Pancreas (tissue), 10 donors: ENCODE measurements at regions of chr11 and their contacts with region 1.

Region 1: DNA sequence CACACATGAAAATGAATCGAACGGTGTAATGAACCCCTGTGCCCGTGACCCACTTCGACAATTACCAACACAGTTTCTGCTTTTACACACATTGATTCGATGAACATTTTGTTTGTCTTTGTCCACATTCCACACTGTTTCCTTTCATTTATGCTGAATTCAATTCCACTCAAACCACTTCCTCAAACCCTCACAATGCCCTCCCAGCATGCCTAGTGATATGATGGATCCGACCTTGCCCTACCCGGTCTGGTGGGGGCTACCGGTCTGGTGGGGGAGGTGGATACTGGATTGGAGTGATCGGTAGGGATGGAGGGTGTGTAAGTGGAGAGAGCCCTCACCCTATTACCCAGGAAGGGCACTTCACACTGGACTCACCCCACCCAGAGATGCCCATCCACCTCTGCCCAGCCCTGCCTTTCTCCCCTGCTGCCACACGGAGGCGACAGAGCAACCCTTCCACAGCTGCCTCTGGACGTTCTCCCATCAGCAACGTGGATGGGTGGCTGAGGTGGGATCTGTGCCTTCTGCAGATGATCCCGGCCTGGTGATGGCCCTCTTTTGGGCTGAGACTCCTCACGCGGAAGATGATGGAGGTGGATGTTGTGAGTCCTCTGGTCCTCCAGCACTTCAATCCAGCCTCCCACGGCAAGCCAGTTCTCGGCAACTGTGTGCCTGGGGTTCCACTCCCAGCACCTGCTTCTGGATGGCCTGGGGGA is 33.0 kb upstream of the P2RY2 start:
- DNase-seq: peak; percentile 45 to 85 (median 70)
- ATAC-seq: peak; percentile 83 to 91 (median 90)
- H3K4me3 ChIP-seq: no peak overlapping the region
- H3K27ac ChIP-seq: peak overlapping the region in 1 of 4 donors; percentile 39
- H3K4me1 ChIP-seq: peaks cover 0 to 3% (median 0%) of the 10 kb centered on the region in 3 donors
- H3K27me3 ChIP-seq: no peaks in the 10 kb centered on the region
- CTCF ChIP-seq: peak; percentile 72 to 86 (median 75)

Region 2: GRCh38 chr11:72439455-72439854 is 745.7 kb before region 1 on chr11:
- intact Hi-C with region 1: no loop called
- DNase-seq: no peak
- ATAC-seq: peak in 1 of 4 donors; percentile 30
- H3K4me3 ChIP-seq: no peak overlapping the region
- H3K27ac ChIP-seq: no peak overlapping the region
- H3K4me1 ChIP-seq: no peaks in the 10 kb centered on the region
- H3K27me3 ChIP-seq: no peaks in the 10 kb centered on the region
- CTCF ChIP-seq: no peak

Region 3: DNA sequence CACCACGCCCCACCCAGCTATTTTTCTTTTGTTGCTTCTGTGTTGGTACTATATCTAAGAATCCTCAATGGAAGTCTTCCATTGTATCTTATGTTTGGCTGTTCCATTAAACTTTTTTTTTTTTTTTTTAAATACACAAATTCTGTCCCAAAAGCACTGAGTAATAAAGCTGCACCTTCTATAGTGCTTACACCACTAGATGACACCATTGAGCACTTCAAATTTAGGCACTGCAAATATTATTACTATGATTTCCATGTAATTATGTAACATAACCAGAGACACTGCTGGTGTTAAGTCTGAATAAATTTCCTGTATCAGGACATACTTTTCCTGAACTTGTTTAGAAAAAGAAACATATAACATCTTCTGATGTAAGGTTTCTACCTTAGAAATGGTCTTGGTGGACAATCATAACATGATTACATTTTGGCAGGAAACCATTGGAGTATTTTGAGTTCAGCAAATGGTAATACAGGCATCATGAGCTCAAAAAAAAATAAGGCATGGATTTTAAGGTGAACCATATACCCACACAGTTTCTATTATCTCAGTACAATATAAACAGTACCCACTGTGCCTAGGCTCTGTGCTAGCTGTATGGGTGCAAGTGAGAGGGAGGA is 260.4 kb before region 1 on chr11:
- intact Hi-C with region 1: loop called in 1 of 3 experiments (anchors 10 kb)
- DNase-seq: no peak
- ATAC-seq: peak; percentile 64 to 92 (median 84)
- H3K4me3 ChIP-seq: no peak overlapping the region
- H3K27ac ChIP-seq: no peak overlapping the region
- H3K4me1 ChIP-seq: peaks cover 0 to 8% (median 0%) of the 10 kb centered on the region in 3 donors
- H3K27me3 ChIP-seq: no peaks in the 10 kb centered on the region
- CTCF ChIP-seq: peak in 3 of 4 donors; percentile 8 to 35 (median 22)

Region 4: DNA sequence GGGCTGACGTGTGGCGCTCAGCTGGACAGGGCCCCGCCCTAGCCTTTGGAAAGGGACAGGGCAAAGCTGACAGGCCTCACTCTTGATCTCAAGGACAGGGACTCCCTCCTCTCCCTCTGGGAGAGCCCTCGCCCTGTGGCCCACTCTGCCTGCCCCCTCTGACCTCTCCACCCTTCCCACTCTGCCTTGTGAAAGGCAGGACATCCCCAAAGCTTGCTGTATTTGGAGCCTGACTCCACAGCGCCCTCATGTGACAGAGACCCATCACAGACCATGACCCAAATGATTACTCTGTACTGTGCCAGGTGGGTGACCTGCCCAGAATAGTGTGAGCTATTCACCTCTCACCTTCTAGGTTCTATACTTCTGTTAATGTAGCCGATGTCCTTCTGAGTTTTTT is 51.7 kb after region 1 on chr11:
- intact Hi-C with region 1: loop called (anchors 5 to 10 kb)
- DNase-seq: peak in 1 of 6 donors; percentile 60
- ATAC-seq: peak; percentile 24 to 65 (median 55)
- H3K4me3 ChIP-seq: no peak overlapping the region
- H3K27ac ChIP-seq: no peak overlapping the region
- H3K4me1 ChIP-seq: no peaks in the 10 kb centered on the region
- H3K27me3 ChIP-seq: no peaks in the 10 kb centered on the region
- CTCF ChIP-seq: peak in 3 of 4 donors; percentile 11 to 21 (median 20)

Region 5: DNA sequence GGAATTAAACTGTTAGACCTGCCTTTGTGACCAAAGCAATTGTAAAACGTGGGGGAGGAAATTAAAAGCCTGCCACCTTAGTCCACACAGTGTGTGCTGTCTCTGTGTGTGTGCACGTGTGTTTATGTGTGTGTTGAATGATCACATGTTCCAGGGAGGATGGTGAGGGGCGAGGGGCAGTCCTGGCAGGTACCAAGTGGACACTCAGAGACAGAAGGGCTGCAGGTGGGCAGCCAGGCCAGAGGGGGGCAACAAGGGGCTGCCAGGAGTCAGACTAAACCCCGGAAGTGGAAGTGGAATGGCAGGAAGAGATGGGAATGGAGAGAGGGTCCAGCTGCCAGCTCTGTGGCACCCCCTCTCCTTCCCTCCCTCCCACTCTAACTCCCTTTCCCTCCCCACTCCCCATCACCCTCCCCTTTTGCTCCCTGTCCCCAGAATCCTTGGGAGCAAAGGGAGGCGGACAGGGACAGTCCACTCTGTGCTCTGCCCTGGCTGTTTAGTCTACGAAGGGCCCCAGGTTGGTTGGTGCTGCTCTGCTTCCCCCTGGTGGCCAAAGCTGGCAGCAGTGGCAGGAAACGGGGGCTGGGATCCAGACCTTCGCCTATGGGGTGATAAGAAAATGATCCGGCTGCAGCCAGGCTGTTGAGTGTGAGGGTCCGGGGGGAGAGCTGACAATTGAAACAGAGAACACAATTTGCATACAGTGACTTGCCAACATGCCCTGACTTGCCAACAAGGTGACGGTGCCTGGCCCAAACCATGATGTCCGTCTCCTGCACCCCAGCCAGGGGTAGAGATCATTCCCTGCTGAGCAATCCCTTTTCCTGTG is 57.4 kb after region 1 on chr11:
- intact Hi-C with region 1: loop called (anchors 5 to 10 kb)
- DNase-seq: peak; percentile 49 to 90 (median 80)
- ATAC-seq: peak; percentile 91 to 96 (median 94)
- H3K4me3 ChIP-seq: peak overlapping the region in 2 of 4 donors; percentile 31
- H3K27ac ChIP-seq: no peak overlapping the region
- H3K4me1 ChIP-seq: no peaks in the 10 kb centered on the region
- H3K27me3 ChIP-seq: no peaks in the 10 kb centered on the region
- CTCF ChIP-seq: peak; percentile 78 to 94 (median 87)